ENCODE measurements at regions of chr4 and their contacts with region 1.

Region 1: DNA sequence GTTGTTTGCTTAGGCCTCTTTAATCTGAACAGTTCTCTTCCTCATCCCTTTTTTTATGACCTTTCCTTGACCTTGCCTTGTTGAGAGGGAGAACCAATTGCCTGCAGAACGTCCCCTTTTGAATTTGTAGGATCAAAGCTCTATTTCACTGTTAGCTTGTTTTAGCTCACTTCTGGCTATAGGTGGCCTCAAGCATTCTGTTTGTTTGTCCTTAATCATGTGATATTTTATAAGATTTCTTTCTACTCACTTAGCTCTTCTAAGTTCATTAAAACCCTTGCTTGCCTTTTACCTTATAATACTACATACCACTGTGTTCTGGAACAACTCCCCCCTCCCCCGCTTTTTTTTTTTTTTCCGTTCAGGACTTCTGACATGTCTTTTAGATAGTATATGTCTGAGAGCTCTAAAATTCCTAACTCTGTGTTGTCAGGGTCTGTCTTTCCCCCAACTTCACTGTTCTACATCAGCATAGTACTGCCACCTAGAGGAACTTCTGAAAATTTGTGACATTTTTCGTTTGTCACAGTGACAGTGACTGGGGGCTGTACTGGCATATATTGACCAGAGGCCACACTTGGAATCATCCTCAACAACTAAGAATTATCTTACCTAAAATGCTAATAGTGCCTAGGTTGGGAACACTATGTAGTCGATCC is 128.5 kb downstream of the LARP7 start:
- DNase-seq: no peak
- H3K4me3 ChIP-seq: no peak overlapping the region
- H3K27ac ChIP-seq: no peak overlapping the region
- H3K4me1 ChIP-seq: no peaks in the 10 kb centered on the region
- H3K27me3 ChIP-seq: no peaks in the 10 kb centered on the region
- CTCF ChIP-seq: no peak
- POLR2A ChIP-seq: no peak

Region 2: GRCh38 chr4:112648263-112649054 is 117.0 kb before region 1 on chr4:
- intact Hi-C with region 1: loop called (anchors 10 kb)
- DNase-seq: no peak
- H3K4me3 ChIP-seq: no peak overlapping the region
- H3K27ac ChIP-seq: no peak overlapping the region
- H3K4me1 ChIP-seq: no peaks in the 10 kb centered on the region
- H3K27me3 ChIP-seq: no peaks in the 10 kb centered on the region
- CTCF ChIP-seq: no peak
- POLR2A ChIP-seq: no peak

Region 3: DNA sequence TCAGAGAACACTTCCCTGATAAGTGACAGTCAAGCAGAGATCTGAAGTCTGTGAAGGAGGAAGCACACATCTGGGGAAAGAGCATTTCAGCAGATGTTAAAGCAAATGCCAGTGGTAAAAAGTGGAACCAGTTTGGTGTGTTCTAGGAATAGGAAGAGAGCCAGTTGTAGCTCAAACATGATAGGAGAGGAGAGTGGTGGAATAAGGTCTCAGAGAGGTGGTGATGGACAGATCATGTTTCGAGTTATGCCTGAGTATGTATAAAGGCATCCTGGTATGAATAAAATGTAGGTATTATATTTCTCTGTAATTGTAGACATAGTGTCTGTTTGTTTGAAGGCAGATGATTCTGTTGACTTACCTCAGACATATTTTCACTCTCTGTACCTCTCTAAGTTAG is 39.4 kb before region 1 on chr4:
- intact Hi-C with region 1: no loop called
- DNase-seq: no peak
- H3K4me3 ChIP-seq: no peak overlapping the region
- H3K27ac ChIP-seq: no peak overlapping the region
- H3K4me1 ChIP-seq: no peaks in the 10 kb centered on the region
- H3K27me3 ChIP-seq: no peaks in the 10 kb centered on the region
- CTCF ChIP-seq: no peak
- POLR2A ChIP-seq: no peak

Region 4: DNA sequence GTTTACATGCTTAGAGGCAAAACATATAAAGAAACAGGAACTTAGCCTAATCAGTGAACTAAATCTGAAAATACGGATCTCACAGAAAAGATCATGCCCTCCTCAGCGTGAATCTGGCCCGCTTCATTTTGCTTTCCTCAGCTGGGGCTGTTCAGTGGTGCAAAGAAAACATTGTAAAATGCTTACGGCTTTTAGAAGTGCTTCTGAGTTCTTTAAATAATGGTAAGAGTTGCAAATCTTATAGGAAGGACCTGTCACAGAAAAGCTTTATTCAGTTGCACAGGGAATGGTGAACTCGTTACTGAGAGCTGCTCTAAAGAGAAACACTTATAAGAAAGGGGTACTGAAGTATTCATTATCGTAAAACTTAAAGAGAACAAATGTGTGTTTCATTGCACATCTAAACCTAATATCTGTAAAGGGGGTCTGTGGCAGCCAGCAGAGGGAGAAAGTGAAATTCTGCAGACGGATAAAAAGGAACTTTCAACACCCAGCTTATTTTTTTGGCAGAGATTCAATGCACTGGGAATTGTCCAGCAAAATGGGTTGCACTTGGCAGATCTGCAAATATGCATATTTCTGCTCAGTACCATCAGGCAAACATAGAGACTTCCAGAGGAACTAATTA is 144.8 kb after region 1 on chr4:
- intact Hi-C with region 1: no loop called
- DNase-seq: no peak
- H3K4me3 ChIP-seq: peak overlapping the region; percentile 24 to 48 (median 34)
- H3K27ac ChIP-seq: no peak overlapping the region
- H3K4me1 ChIP-seq: no peaks in the 10 kb centered on the region
- H3K27me3 ChIP-seq: no peaks in the 10 kb centered on the region
- CTCF ChIP-seq: no peak
- POLR2A ChIP-seq: no peak

Region 5: GRCh38 chr4:114654592-114654991 is 1889.1 kb after region 1 on chr4:
- intact Hi-C with region 1: no loop called
- DNase-seq: no peak
- H3K4me3 ChIP-seq: no peak overlapping the region
- H3K27ac ChIP-seq: no peak overlapping the region
- H3K4me1 ChIP-seq: no peaks in the 10 kb centered on the region
- H3K27me3 ChIP-seq: no peaks in the 10 kb centered on the region
- CTCF ChIP-seq: no peak
- POLR2A ChIP-seq: no peak